ENCODE measurements at regions of chr1 and their contacts with region 1.

Region 1: DNA sequence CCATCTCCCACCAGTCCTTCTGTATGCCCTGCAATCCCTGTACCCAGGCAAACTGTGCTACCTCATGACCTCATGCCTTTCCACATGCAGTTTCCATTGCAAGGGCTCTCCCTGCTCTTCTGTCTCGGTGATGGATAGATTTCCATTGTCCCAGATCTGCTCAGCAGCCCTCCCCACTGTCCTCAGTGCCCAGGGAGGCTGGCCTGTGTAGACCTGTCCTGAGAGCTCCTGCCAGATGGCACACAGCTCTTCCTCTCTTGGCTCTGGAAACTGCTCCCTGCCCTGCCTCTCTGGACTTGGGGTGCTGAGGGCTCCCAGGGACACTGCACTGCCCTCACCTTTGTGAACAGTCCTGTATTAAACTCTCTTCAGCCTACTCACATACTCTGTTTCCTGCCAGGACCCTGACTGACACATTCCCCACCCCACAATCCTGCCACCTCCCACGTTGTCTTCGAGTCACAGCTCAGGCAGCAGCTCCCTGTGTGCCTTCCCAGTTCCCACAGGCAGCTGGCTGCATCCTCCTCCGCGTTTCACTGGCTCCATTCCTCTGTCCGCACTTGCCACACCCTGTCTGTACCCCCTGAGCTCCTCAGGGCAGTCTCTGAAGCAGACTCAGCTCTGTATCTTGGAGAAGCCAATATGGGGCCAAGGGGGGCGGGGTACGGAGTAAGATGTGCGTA is 57.0 kb downstream of the SPATA46 start:
- DNase-seq: no peak
- H3K4me3 ChIP-seq: no peak overlapping the region
- H3K4me3 Mint-ChIP-seq: no peak overlapping the region
- H3K27ac ChIP-seq: no peak overlapping the region
- H3K27ac Mint-ChIP-seq: peak overlapping the region in 2 of 7 donors; percentile 62 to 78
- H3K4me1 ChIP-seq: peaks cover 10 to 14% of the 10 kb centered on the region in 2 donors
- H3K4me1 Mint-ChIP-seq: peaks cover 31% of the 10 kb centered on the region
- H3K27me3 ChIP-seq: no peaks in the 10 kb centered on the region
- H3K27me3 Mint-ChIP-seq: peaks cover 2 to 3% (median 2%) of the 10 kb centered on the region in 3 donors
- CTCF ChIP-seq: no peak

Region 2: GRCh38 chr1:162422662-162423375 is 103.2 kb after region 1 on chr1:
- intact Hi-C with region 1: loop called in 1 of 2 experiments (anchors 10 kb)
- DNase-seq: peak; percentile 85 to 86 (median 86)
- H3K4me3 ChIP-seq: peak overlapping the region in 1 of 3 experiments; percentile 11
- H3K4me3 Mint-ChIP-seq: peak overlapping the region in 1 of 2 donors; percentile 53
- H3K27ac ChIP-seq: peak overlapping the region in 1 of 2 donors; percentile 56
- H3K27ac Mint-ChIP-seq: peak overlapping the region; percentile 47 to 89 (median 85)
- H3K4me1 ChIP-seq: peaks cover 38 to 43% of the 10 kb centered on the region in 2 donors
- H3K4me1 Mint-ChIP-seq: peaks cover 46% of the 10 kb centered on the region
- H3K27me3 ChIP-seq: no peaks in the 10 kb centered on the region
- H3K27me3 Mint-ChIP-seq: peaks cover 0 to 8% (median 3%) of the 10 kb centered on the region in 3 donors
- CTCF ChIP-seq: no peak